PC-9 (cell line): ENCODE measurements at regions of chr11 and their contacts with region 1.

Region 1: DNA sequence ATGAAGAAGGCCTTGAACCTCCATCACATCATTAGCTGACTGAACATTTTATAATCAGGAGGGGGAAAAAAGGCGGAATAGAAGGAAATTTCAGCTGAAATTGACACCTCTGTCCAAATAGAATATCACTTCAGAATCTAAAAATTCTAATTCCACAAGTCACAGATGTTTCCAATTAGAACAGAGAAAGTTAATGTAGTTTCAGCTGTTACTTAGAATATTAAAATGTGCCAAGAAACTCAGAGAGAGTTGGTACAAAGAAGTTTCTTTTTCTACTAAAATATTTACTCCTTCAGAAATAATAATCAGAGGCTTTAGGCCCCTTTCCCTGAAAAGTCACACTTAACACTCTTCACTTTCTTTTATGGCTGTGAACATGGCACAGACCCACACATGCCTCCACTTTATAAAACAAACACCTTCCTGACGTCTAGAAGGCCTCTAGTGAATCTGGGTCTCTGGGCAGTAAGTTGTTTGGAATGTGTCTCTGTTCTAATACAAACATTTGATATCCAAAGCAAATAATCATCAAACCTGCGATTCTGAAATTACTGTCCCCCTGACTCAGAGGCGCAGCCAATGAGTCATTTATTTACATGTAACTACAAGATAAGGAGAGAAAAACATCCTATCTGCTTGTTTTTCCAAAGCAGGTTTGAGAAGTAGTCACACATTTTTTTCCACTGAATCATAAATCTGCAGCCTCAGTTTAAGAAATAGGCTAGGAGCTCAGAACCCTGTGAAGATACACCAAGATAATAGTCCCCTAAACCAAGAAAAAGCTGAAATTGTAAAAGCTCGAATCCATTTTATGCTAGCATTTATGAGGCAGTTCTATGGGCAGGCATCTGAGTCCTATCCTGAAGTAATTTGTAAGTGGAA is 148.4 kb downstream of the ME3 start:
- DNase-seq: peak; percentile 62 to 100
- H3K4me3 ChIP-seq: peak overlapping the region; percentile 27; the same call in 1 of the 2 replicates
- H3K27ac ChIP-seq: peak overlapping the region; percentile 94
- H3K4me1 ChIP-seq: peaks cover 37% of the 10 kb centered on the region
- H3K27me3 ChIP-seq: no peaks in the 10 kb centered on the region
- CTCF ChIP-seq: no peak

Region 2: DNA sequence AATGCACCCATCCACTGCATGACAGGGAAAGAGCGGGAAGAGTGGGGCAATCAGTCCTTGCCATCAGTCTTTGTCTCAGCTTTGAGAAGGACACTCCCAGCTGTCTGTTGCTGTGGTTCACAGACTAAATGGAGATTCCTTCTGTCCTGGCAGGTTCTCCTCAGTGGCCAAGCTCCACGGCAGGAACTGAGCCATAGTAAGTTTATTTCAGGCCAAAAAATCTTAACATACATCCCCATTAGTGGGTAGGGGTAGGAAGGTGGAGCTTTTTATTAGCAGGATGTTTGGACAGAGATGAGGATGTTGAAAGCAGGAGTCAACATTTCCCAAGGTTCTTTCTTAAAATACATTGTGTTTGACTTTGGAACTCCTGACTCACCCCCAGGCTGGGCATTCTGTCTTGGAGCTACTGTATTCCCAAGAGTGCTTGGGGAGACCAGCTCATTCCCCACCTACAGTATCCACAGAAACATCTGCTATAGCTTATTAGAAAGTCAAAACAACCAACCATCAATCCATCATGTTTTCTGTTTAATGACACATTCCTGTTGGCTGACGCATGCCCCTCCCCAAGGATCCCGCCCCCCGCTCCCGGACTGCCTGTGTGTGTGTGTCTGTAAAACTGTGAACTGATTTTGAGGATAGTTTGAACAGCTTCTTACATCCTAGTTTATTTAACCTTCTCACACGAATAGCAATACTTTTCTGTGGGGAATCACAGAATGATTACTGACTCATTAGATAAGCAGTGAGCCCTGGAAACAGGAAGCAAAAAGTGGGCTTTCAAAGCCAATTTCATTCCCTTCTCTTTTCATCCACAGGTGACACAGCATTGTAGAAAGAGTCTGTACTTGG is 39.8 kb before region 1 on chr11:
- CTCF ChIA-PET with region 1: no interaction called
- POLR2A ChIA-PET with region 1: interaction called, 17 read pairs
- intact Hi-C with region 1: loop called (anchors 1 kb)
- DNase-seq: peak; percentile 87 to 100
- H3K4me3 ChIP-seq: peak overlapping the region; percentile 4; the same call in 1 of the 2 replicates
- H3K27ac ChIP-seq: peak overlapping the region; percentile 97
- H3K4me1 ChIP-seq: peaks cover 50% of the 10 kb centered on the region
- H3K27me3 ChIP-seq: no peaks in the 10 kb centered on the region
- CTCF ChIP-seq: no peak

Region 3: DNA sequence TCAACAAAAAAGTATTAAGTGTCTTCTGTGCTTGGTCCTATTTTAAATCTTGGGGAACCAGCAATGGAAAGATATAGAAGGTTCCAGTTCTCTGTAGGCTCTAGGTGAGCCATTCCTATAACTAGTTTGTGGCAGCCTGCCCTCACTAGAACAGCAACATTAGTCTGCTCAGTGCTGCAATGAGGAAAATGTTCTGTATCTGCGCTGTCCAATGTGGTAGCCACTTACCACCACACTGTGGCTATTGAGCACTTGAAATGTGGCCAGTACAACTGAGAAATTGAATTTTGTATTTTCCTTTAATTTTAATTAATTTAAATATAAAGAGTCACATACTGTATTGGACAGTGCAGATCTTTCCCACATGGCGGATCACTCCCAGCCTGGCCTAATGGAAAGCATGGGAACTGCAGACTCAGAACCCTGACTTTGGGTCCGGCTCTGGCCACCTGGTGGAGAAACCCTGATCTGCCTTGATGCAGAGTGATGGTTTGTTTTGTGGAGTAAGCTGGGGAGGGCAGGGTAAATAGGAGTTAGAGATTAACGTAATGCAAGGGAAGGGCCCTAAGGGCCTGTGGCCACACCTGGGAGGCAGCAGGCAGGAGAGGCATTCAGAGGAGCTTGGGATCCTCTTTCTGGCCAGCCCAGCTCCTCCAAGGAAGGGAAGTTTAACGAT is 47.4 kb after region 1 on chr11:
- CTCF ChIA-PET with region 1: no interaction called
- POLR2A ChIA-PET with region 1: no interaction called
- intact Hi-C with region 1: loop called (anchors 1 kb)
- DNase-seq: no peak
- H3K4me3 ChIP-seq: no peak overlapping the region
- H3K27ac ChIP-seq: no peak overlapping the region
- H3K4me1 ChIP-seq: peaks cover 11% of the 10 kb centered on the region; the same call in 1 of the 2 replicates
- H3K27me3 ChIP-seq: no peaks in the 10 kb centered on the region
- CTCF ChIP-seq: peak; percentile 60

Region 4: DNA sequence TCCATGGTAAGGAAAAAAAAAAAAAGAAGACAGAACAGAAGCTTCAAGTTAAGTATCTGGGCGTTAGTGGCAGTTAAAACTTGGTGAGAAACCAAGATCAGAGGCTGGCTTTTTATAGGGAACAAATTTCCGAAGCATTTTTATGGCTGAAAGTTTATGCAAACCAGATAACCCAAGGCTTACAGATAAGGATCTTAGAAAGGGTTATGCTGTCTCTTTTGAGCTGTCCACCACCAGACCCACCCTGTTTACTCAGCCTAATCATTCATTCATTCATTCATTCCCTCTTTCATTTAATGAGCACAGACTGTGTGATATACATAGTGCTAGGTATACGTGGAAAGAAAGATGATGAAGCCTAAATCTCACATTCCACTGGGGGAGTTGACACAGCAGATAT is 58.9 kb after region 1 on chr11:
- CTCF ChIA-PET with region 1: no interaction called
- POLR2A ChIA-PET with region 1: no interaction called
- intact Hi-C with region 1: no loop called
- DNase-seq: no peak
- H3K4me3 ChIP-seq: no peak overlapping the region
- H3K27ac ChIP-seq: no peak overlapping the region
- H3K4me1 ChIP-seq: no peaks in the 10 kb centered on the region; the same call in 1 of the 2 replicates
- H3K27me3 ChIP-seq: no peaks in the 10 kb centered on the region
- CTCF ChIP-seq: no peak

Region 5: GRCh38 chr11:86608251-86608799 is 84.3 kb after region 1 on chr11:
- CTCF ChIA-PET with region 1: no interaction called
- POLR2A ChIA-PET with region 1: no interaction called
- intact Hi-C with region 1: loop called (anchors 1 kb)
- DNase-seq: peak; percentile 72 to 73
- H3K4me3 ChIP-seq: no peak overlapping the region
- H3K27ac ChIP-seq: no peak overlapping the region
- H3K4me1 ChIP-seq: peaks cover 22% of the 10 kb centered on the region
- H3K27me3 ChIP-seq: no peaks in the 10 kb centered on the region
- CTCF ChIP-seq: peak; percentile 96

Region 6: GRCh38 chr11:86735462-86736302 is 211.7 kb after region 1 on chr11:
- CTCF ChIA-PET with region 1: no interaction called
- POLR2A ChIA-PET with region 1: no interaction called
- intact Hi-C with region 1: loop called (anchors 1 kb)
- DNase-seq: peak; percentile 54 to 92
- H3K4me3 ChIP-seq: no peak overlapping the region
- H3K27ac ChIP-seq: peak overlapping the region; percentile 76
- H3K4me1 ChIP-seq: peaks cover 75% of the 10 kb centered on the region
- H3K27me3 ChIP-seq: no peaks in the 10 kb centered on the region
- CTCF ChIP-seq: no peak

Region 7: DNA sequence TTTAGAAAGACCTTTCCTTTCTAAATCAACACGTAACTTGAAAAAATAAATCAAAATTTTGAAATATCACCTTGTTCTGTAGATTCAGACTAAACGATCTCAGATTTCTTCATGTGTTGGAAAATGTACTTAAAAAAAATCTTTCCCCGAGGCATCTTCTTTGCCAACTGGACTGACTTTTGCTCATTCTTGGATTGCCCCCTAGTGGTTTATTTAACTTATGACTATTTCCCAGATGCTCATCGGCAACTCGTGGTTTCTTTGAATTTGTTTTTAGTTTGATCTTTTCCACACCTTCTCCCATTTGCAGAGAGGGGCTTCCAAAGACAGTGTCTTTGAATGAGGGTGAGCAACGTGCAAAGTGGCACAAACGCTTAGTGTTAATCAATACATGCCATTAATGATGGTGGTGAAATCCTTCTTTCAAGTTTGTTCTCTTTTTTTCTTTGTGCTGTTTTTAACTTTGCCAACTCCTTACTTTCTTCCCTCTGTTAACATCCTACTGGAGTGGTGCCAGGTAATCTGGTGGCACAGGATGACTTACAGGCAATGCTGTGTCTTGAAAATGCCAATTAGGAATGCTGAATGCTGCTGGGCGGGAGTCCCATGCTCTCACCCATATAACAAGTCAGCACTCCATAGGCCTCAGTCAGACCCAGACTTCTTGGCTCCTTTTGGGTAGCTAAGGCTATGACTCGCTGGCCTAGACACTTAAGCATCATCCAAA is 294.6 kb after region 1 on chr11:
- CTCF ChIA-PET with region 1: no interaction called
- POLR2A ChIA-PET with region 1: no interaction called
- intact Hi-C with region 1: loop called (anchors 5 kb)
- DNase-seq: peak in 1 of 2 experiments; percentile 77
- H3K4me3 ChIP-seq: no peak overlapping the region
- H3K27ac ChIP-seq: no peak overlapping the region
- H3K4me1 ChIP-seq: peaks cover 20% of the 10 kb centered on the region
- H3K27me3 ChIP-seq: no peaks in the 10 kb centered on the region
- CTCF ChIP-seq: peak; percentile 94